Activated CD4-positive, alpha-beta memory T cell treated with anti-CD3 and anti-CD28 coated beads for 36 hours (primary cell): ENCODE measurements at regions of chr12 and their contacts with region 1.

Region 1: DNA sequence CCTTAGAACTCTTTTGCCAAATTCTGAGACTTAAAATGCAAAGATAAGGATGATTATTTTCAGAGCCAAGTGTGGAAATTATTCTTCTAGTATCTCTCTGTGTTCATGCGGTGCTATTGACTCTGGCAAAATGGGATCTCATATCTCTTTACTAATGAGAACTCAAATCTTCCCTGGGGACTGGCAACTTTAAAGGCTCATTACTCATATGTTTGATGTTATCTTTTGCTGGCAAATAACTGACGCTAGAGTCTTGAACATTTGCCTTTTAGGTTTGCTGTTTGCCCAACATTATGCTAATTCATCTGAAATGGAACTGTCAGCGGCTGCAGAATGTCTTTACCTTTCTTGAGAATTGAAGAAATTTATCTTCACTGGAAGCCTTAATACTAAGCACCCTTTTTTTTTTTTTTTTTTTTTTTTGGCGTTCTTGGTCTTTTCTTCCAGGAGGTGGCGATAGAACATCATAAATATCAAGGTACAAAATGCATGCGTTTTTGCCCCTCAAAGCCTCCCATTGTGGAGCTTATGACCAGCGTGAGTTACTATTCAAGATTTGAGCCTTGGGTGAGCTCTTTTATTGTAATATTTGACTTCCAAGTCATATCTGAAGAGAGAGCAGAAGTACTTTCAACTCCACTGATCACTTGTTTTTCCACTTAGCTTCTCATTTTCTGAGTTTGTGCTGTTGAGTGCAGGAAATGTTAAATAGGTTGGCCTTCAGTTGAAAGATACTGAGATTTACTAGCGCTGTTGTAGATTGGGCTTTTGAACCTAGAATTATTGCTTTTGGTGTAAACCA is 86.6 kb downstream of the CAND1 start:
- DNase-seq: peak; percentile 11
- H3K4me3 Mint-ChIP-seq: no peak overlapping the region
- H3K27ac Mint-ChIP-seq: no peak overlapping the region
- H3K4me1 Mint-ChIP-seq: peaks cover 35% of the 10 kb centered on the region
- H3K27me3 Mint-ChIP-seq: no peaks in the 10 kb centered on the region

Region 2: GRCh38 chr12:67052981-67053380 is 302.8 kb before region 1 on chr12:
- CTCF ChIA-PET with region 1: no interaction called
- POLR2A ChIA-PET with region 1: no interaction called
- intact Hi-C with region 1: no loop called
- DNase-seq: no peak
- H3K4me3 Mint-ChIP-seq: no peak overlapping the region
- H3K27ac Mint-ChIP-seq: no peak overlapping the region
- H3K4me1 Mint-ChIP-seq: no peaks in the 10 kb centered on the region
- H3K27me3 Mint-ChIP-seq: peaks cover 4% of the 10 kb centered on the region

Region 3: DNA sequence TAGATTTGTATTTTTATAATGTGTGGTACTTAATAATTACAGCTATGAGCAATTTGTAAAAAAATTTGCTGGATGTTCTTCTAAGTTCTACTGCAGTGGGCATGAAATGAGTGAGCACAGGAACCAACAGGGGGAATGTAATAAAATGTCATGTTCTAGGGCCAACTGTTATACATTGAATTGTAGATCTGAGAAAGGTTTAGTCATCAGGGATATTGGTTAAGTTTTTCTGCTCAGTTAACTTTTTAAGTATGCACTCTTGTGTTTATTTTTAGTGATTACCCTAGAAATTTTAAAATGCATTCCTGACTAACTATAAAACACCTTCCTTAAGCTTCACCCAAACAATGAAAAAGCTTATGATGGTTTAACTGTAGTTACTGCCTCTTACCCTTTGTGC is 15.2 kb after region 1 on chr12:
- CTCF ChIA-PET with region 1: interaction called, 11 read pairs
- POLR2A ChIA-PET with region 1: interaction called, 3 read pairs
- intact Hi-C with region 1: no loop called
- DNase-seq: no peak
- H3K4me3 Mint-ChIP-seq: no peak overlapping the region
- H3K27ac Mint-ChIP-seq: no peak overlapping the region
- H3K4me1 Mint-ChIP-seq: no peaks in the 10 kb centered on the region
- H3K27me3 Mint-ChIP-seq: no peaks in the 10 kb centered on the region

Region 4: DNA sequence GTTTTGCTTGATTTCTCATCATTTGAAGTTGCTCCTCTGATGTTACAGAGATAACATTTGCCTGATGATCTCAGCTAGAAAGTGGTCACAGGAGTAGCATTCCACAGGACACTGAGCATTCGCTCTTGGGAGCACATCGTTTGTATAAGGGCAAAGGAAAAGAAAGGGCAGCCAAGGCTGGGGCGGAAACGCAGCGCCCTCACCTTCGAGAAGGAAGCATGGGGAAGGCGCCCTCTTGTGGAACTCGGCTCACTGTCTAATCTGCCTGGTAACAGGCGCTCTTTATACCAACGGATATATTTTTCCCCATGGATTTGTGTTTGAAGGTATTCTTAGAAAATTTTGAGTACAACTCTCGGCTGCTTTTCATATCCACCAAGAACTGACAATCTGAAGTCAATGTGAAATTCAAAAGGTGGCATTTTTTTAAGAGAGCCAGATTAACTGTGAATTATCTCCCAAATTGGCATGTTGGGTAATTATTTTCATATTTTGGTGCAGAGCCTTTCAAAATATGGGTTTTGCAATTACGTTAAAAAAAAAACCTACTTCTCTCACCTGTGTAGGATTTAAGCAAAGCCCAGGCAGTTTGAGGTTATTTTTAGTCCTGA is 86.1 kb after region 1 on chr12:
- CTCF ChIA-PET with region 1: interaction called, 23 read pairs
- POLR2A ChIA-PET with region 1: interaction called, 5 read pairs
- intact Hi-C with region 1: loop called (anchors 2 kb)
- DNase-seq: peak; percentile 89
- H3K4me3 Mint-ChIP-seq: peak overlapping the region; percentile 35
- H3K27ac Mint-ChIP-seq: peak overlapping the region; percentile 44
- H3K4me1 Mint-ChIP-seq: peaks cover 21% of the 10 kb centered on the region
- H3K27me3 Mint-ChIP-seq: peaks cover 4% of the 10 kb centered on the region

Region 5: DNA sequence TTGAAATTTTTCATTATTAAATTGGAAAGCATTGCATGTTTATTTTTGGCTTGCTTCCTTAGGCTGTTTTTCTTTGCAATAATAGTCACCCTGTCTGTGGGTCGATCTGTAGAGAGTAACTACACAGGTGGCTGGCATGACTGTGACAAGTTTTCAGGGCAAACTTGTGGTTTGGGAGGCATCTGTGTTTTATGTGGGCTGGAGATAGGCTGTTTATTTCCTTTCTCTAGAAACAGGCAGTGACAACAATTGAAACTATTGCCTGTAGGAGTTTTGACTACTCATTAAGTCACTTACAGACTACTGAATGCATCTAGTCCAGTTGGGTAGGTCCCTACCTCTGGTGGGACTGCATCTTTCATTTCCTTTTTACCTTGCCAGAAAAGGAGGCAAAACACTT is 448.4 kb after region 1 on chr12:
- CTCF ChIA-PET with region 1: no interaction called
- POLR2A ChIA-PET with region 1: no interaction called
- intact Hi-C with region 1: loop called (anchors 5 kb)
- DNase-seq: peak; percentile 80
- H3K4me3 Mint-ChIP-seq: no peak overlapping the region
- H3K27ac Mint-ChIP-seq: no peak overlapping the region
- H3K4me1 Mint-ChIP-seq: peaks cover 31% of the 10 kb centered on the region
- H3K27me3 Mint-ChIP-seq: no peaks in the 10 kb centered on the region

Region 6: DNA sequence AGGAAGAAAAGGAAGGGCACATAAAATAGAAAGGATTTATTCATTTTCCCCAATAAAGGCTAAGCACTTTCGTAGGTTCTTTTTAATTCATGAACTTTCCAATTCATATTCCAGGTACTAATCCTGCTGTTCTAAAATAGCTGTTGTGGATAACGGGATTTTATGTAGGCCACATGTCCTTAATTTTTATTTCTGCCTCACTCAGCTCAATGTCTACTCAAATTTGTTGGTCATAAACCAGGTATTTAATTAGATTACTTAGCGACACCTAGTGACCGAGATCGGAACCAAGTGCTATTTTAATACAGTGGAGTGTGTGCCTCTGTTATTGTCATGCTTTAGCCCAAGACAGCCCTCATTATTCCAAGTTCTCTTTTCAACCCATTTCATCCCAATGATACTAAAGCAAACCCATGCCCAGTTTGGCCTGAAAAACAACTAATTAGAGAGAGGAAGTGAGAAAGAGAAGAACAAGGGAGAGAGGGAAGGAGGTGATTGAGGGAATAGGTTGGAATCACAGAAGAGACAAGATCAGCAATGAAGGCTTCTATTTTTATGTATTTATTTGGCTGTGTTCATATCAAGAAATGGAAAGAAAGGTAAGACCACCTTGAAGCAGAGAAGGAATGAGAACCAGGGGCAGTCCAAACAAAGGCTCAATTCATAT is 587.6 kb after region 1 on chr12:
- CTCF ChIA-PET with region 1: interaction called, 130 read pairs
- POLR2A ChIA-PET with region 1: no interaction called
- intact Hi-C with region 1: loop called (anchors 1 kb)
- DNase-seq: peak; percentile 57
- H3K4me3 Mint-ChIP-seq: no peak overlapping the region
- H3K27ac Mint-ChIP-seq: no peak overlapping the region
- H3K4me1 Mint-ChIP-seq: peaks cover 2% of the 10 kb centered on the region
- H3K27me3 Mint-ChIP-seq: peaks cover 8% of the 10 kb centered on the region

Region 7: GRCh38 chr12:68317047-68317667 is 961.4 kb after region 1 on chr12:
- CTCF ChIA-PET with region 1: no interaction called
- POLR2A ChIA-PET with region 1: no interaction called
- intact Hi-C with region 1: loop called (anchors 10 kb)
- DNase-seq: peak; percentile 37
- H3K4me3 Mint-ChIP-seq: no peak overlapping the region
- H3K27ac Mint-ChIP-seq: no peak overlapping the region
- H3K4me1 Mint-ChIP-seq: no peaks in the 10 kb centered on the region
- H3K27me3 Mint-ChIP-seq: no peaks in the 10 kb centered on the region

Region 8: DNA sequence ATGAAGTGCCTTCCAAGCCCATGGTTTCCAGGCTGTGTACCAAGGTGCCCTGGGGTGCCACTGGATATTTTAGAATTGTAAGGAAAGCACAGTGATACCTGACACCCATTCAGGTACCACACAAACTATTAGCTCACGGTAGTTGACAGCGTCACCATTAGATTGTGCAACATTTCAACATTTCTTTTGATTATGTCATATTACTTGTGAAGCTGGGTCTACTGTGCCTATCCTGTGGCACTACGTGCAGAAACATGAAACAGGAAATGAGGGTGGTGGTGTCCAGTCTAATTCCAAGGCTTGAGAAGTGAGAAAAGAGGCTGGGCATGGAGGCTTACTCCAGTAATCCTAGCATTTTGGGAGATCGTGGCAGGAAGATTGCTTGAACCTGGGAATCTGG is 1652.7 kb after region 1 on chr12:
- CTCF ChIA-PET with region 1: no interaction called
- POLR2A ChIA-PET with region 1: no interaction called
- intact Hi-C with region 1: no loop called
- DNase-seq: no peak
- H3K4me3 Mint-ChIP-seq: no peak overlapping the region
- H3K27ac Mint-ChIP-seq: no peak overlapping the region
- H3K4me1 Mint-ChIP-seq: peaks cover 11% of the 10 kb centered on the region
- H3K27me3 Mint-ChIP-seq: peaks cover 11% of the 10 kb centered on the region